SK-N-SH (cell line): ENCODE measurements at regions of chr6 and their contacts with region 1.

Region 1: GRCh38 chr6:167907837-167908681 is 81.3 kb downstream of the AFDN start:
- DNase-seq: peak; percentile 28
- H3K4me3 ChIP-seq: no peak overlapping the region
- H3K27ac ChIP-seq: no peak overlapping the region
- H3K4me1 ChIP-seq: peaks cover 0 to 7% of the 10 kb centered on the region in 2 experiments; a peak in 2 of 4 replicates
- H3K27me3 ChIP-seq: no peaks in the 10 kb centered on the region
- CTCF ChIP-seq: peak; percentile 52
- EP300 ChIP-seq: no peak
- RAD21 ChIP-seq: peak; percentile 71

Region 2: DNA sequence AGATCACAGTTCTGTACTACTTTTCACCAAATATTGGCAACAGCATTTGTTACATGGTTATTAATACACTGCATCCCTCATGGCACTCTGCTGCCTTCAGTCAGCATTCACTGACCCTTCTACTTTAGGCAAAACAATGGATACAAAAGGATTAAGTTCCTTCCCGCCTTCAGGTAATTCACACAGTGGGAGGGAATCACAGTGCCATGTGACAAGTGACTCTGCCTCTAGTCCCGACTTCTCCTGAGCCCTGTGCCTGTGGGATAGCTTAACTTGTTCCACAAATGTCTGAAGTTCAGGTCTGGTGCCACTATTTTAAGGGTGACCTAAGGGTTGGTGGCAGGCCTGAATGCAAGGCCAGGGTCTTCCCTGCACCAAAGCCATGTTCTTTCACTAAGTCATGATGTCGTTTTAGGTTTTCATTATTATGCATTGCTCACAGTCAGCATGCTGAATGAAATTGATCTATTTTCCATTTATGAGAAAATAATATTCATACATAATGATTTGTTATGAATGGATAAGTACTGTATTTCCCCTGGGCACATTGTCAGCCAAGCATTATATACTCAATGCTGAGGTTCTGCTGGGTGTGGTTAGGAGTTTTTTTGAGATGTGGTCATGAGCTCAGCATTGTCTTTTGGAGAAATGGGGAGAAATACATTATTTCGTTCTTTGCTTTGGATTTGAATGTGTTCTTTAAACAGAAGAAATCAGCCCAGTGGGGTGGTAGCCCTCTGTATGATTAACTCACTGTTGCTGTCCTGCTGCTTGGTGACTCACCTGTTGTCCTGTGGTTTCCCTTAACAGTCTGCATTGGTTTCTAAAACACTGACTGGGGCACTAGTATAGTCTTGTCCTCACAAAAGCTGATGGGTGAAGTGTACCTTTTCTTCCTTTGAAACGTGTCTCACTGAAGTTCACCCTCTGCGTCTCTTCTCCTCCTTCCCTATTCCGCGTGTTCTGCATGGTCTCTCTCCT is 14.9 kb before region 1 on chr6:
- CTCF ChIA-PET with region 1: interaction called, 21 read pairs
- POLR2A ChIA-PET with region 1: no interaction called
- DNase-seq: no peak
- H3K4me3 ChIP-seq: no peak overlapping the region
- H3K27ac ChIP-seq: no peak overlapping the region
- H3K4me1 ChIP-seq: no peaks in the 10 kb centered on the region; a peak in 1 of 4 replicates
- H3K27me3 ChIP-seq: no peaks in the 10 kb centered on the region
- CTCF ChIP-seq: no peak
- EP300 ChIP-seq: no peak
- RAD21 ChIP-seq: no peak

Region 3: GRCh38 chr6:167920165-167920564 is 12.1 kb after region 1 on chr6:
- CTCF ChIA-PET with region 1: interaction called, 12 read pairs
- POLR2A ChIA-PET with region 1: no interaction called
- DNase-seq: no peak
- H3K4me3 ChIP-seq: no peak overlapping the region
- H3K27ac ChIP-seq: no peak overlapping the region
- H3K4me1 ChIP-seq: no peaks in the 10 kb centered on the region
- H3K27me3 ChIP-seq: no peaks in the 10 kb centered on the region
- CTCF ChIP-seq: no peak
- EP300 ChIP-seq: no peak
- RAD21 ChIP-seq: no peak

Region 4: DNA sequence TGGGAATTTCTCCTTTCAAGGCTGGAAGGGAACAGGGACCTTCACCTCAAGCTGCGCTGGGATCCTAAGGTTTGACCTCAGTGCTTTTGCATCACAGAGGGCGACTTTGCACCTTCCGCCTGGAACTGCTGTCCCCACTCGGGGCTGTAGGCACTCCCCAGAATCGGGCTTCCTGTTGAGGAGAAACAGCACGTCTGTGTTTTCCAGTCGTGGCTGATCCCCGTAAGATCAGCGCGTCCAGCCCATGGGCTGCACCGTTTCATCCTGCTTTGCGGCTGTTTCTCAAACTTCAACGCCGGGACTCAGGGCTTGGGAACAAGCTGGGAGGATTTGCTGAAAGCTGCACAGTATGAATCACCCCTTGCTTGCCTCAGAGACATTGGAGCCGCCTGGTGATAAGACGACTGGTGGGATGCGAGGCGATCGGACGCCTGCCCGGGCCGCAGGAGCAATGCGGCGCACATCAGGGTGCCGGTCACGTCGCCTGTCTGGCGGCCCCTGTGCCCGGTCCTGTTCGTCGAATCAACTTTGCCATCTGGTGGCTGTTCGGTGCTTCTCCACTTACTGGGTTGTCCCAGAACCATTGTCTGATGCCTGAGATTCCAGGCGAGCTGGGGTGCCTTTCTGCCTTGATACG is 224.6 kb after region 1 on chr6:
- CTCF ChIA-PET with region 1: interaction called, 25 read pairs
- POLR2A ChIA-PET with region 1: no interaction called
- DNase-seq: peak; percentile 72
- H3K4me3 ChIP-seq: no peak overlapping the region
- H3K27ac ChIP-seq: no peak overlapping the region
- H3K4me1 ChIP-seq: no peaks in the 10 kb centered on the region; a peak in 1 of 4 replicates
- H3K27me3 ChIP-seq: no peaks in the 10 kb centered on the region
- CTCF ChIP-seq: no peak
- EP300 ChIP-seq: no peak
- RAD21 ChIP-seq: peak; percentile 52